ENCODE measurements at regions of chr7 and their contacts with region 1.

Region 1: GRCh38 chr7:54773472-54774399 is 14.7 kb upstream of the SEC61G start:
- DNase-seq: peak; percentile 91
- ATAC-seq: peak; percentile 89
- H3K4me3 ChIP-seq: peak overlapping the region; percentile 8 to 47
- H3K27ac ChIP-seq: peak overlapping the region; percentile 37; the same call in 1 of the 2 replicates
- H3K4me1 ChIP-seq: peaks cover 11 to 29% of the 10 kb centered on the region in 2 experiments
- H3K27me3 ChIP-seq: no peaks in the 10 kb centered on the region
- CTCF ChIP-seq: peak; percentile 79 to 93 (median 88)
- POLR2A ChIP-seq: no peak
- RAD21 ChIP-seq: peak; percentile 94

Region 2: GRCh38 chr7:54932818-54933543 is 159.2 kb after region 1 on chr7:
- CTCF ChIA-PET with region 1: no interaction called
- POLR2A ChIA-PET with region 1: no interaction called
- RAD21 ChIA-PET with region 1: no interaction called
- intact Hi-C with region 1: loop called (anchors 2 kb)
- DNase-seq: peak; percentile 28
- ATAC-seq: peak; percentile 99
- H3K4me3 ChIP-seq: peak overlapping the region; percentile 42 to 54
- H3K27ac ChIP-seq: no peak overlapping the region
- H3K4me1 ChIP-seq: peaks cover 0 to 8% of the 10 kb centered on the region in 2 experiments; a peak in 2 of 4 replicates
- H3K27me3 ChIP-seq: no peaks in the 10 kb centered on the region
- CTCF ChIP-seq: no peak
- POLR2A ChIP-seq: peak; percentile 22
- RAD21 ChIP-seq: no peak

Region 3: GRCh38 chr7:55132890-55133551 is 359.3 kb after region 1 on chr7:
- CTCF ChIA-PET with region 1: interaction called, 4 read pairs
- POLR2A ChIA-PET with region 1: no interaction called
- RAD21 ChIA-PET with region 1: no interaction called
- intact Hi-C with region 1: loop called (anchors 5 kb)
- DNase-seq: peak; percentile 97
- ATAC-seq: peak; percentile 83
- H3K4me3 ChIP-seq: peak overlapping the region; percentile 3 to 28
- H3K27ac ChIP-seq: peak overlapping the region; percentile 98
- H3K4me1 ChIP-seq: peaks cover 71 to 78% of the 10 kb centered on the region in 2 experiments
- H3K27me3 ChIP-seq: no peaks in the 10 kb centered on the region
- CTCF ChIP-seq: no peak
- POLR2A ChIP-seq: no peak
- RAD21 ChIP-seq: peak; percentile 38

Region 4: GRCh38 chr7:55415173-55415778 is 641.5 kb after region 1 on chr7:
- CTCF ChIA-PET with region 1: no interaction called
- POLR2A ChIA-PET with region 1: no interaction called
- RAD21 ChIA-PET with region 1: no interaction called
- intact Hi-C with region 1: loop called (anchors 2 kb)
- DNase-seq: peak; percentile 43
- ATAC-seq: peak; percentile 95
- H3K4me3 ChIP-seq: no peak overlapping the region
- H3K27ac ChIP-seq: no peak overlapping the region
- H3K4me1 ChIP-seq: no peaks in the 10 kb centered on the region
- H3K27me3 ChIP-seq: no peaks in the 10 kb centered on the region
- CTCF ChIP-seq: peak; percentile 62 to 84 (median 65)
- POLR2A ChIP-seq: no peak
- RAD21 ChIP-seq: peak; percentile 66

Measured in HCT116 (cell line).